ENCODE measurements at regions of chr1 and their contacts with region 1.

Region 1: GRCh38 chr1:92831762-92832536 is at the start of gene RPL5:
- DNase-seq: peak; percentile 97 to 100 (median 98)
- H3K4me3 ChIP-seq: peak within 1 kb of the TSS; percentile 54 to 100
- H3K4me3 Mint-ChIP-seq: peak within 1 kb of the TSS; percentile 98 to 100 (median 100)
- H3K27ac ChIP-seq: peak within 1 kb of the TSS; percentile 93
- H3K27ac Mint-ChIP-seq: peak within 1 kb of the TSS; percentile 98 to 100 (median 99)
- H3K4me1 ChIP-seq: peaks cover 46% of the 10 kb centered on the region
- H3K4me1 Mint-ChIP-seq: peaks cover 35 to 55% (median 45%) of the 10 kb centered on the region in 4 donors
- H3K27me3 ChIP-seq: no peaks in the 10 kb centered on the region
- H3K27me3 Mint-ChIP-seq: peaks cover 0 to 1% of the 10 kb centered on the region in 2 donors
- total RNA-seq, gene RPL5: 1,501 to 1,588 TPM

Region 2: GRCh38 chr1:92804721-92805169 is 27.2 kb before region 1 on chr1:
- CTCF ChIA-PET with region 1: no interaction called
- POLR2A ChIA-PET with region 1: no interaction called
- intact Hi-C with region 1: no loop called
- DNase-seq: peak in 3 of 5 donors; percentile 2 to 11 (median 7)
- H3K4me3 ChIP-seq: no peak overlapping the region
- H3K4me3 Mint-ChIP-seq: no peak overlapping the region
- H3K27ac ChIP-seq: no peak overlapping the region
- H3K27ac Mint-ChIP-seq: no peak overlapping the region
- H3K4me1 ChIP-seq: peaks cover 7% of the 10 kb centered on the region
- H3K4me1 Mint-ChIP-seq: peaks cover 0 to 7% (median 2%) of the 10 kb centered on the region in 4 donors
- H3K27me3 ChIP-seq: no peaks in the 10 kb centered on the region
- H3K27me3 Mint-ChIP-seq: no peaks in the 10 kb centered on the region

Region 3: GRCh38 chr1:92817986-92818764 is 13.8 kb before region 1 on chr1:
- CTCF ChIA-PET with region 1: interaction called, 15 read pairs
- POLR2A ChIA-PET with region 1: interaction called, 3 read pairs
- intact Hi-C with region 1: no loop called
- DNase-seq: peak in 4 of 5 donors; percentile 16 to 43 (median 26)
- H3K4me3 ChIP-seq: no peak overlapping the region
- H3K4me3 Mint-ChIP-seq: no peak overlapping the region
- H3K27ac ChIP-seq: no peak overlapping the region
- H3K27ac Mint-ChIP-seq: peak overlapping the region in 1 of 7 donors; percentile 3
- H3K4me1 ChIP-seq: no peaks in the 10 kb centered on the region
- H3K4me1 Mint-ChIP-seq: peaks cover 0 to 3% (median 0%) of the 10 kb centered on the region in 4 donors
- H3K27me3 ChIP-seq: no peaks in the 10 kb centered on the region
- H3K27me3 Mint-ChIP-seq: peaks cover 4 to 10% of the 10 kb centered on the region in 2 donors

Region 4: GRCh38 chr1:92848201-92848600 is 16.3 kb after region 1 on chr1:
- CTCF ChIA-PET with region 1: interaction called, 10 read pairs
- POLR2A ChIA-PET with region 1: interaction called, 6 read pairs
- intact Hi-C with region 1: no loop called
- DNase-seq: no peak
- H3K4me3 ChIP-seq: no peak overlapping the region
- H3K4me3 Mint-ChIP-seq: no peak overlapping the region
- H3K27ac ChIP-seq: no peak overlapping the region
- H3K27ac Mint-ChIP-seq: peak overlapping the region in 4 of 7 donors; percentile 4 to 86 (median 49)
- H3K4me1 ChIP-seq: no peaks in the 10 kb centered on the region
- H3K4me1 Mint-ChIP-seq: peaks cover 0 to 16% (median 5%) of the 10 kb centered on the region in 4 donors
- H3K27me3 ChIP-seq: no peaks in the 10 kb centered on the region
- H3K27me3 Mint-ChIP-seq: no peaks in the 10 kb centered on the region

Measured in CD4-positive, alpha-beta memory T cell (primary cell).